ENCODE measurements at regions of chrX and their contacts with region 1.

Region 1: GRCh38 chrX:41457613-41458192 is 10.6 kb downstream of the NYX start:
- DNase-seq: no peak
- H3K4me3 ChIP-seq: no peak overlapping the region
- H3K27ac ChIP-seq: no peak overlapping the region
- H3K4me1 ChIP-seq: no peaks in the 10 kb centered on the region
- H3K27me3 ChIP-seq: no peaks in the 10 kb centered on the region
- CTCF ChIP-seq: 0 out of 2 replicates have a peak, but pooled peaks have one; percentile 20

Region 2: GRCh38 chrX:41728125-41728524 is 270.4 kb after region 1 on chrX:
- CTCF ChIA-PET with region 1: no interaction called
- POLR2A ChIA-PET with region 1: no interaction called
- intact Hi-C with region 1: loop called (anchors 5 kb)
- DNase-seq: no peak
- H3K4me3 ChIP-seq: no peak overlapping the region
- H3K27ac ChIP-seq: no peak overlapping the region
- H3K4me1 ChIP-seq: no peaks in the 10 kb centered on the region
- H3K27me3 ChIP-seq: no peaks in the 10 kb centered on the region
- CTCF ChIP-seq: no peak

Region 3: DNA sequence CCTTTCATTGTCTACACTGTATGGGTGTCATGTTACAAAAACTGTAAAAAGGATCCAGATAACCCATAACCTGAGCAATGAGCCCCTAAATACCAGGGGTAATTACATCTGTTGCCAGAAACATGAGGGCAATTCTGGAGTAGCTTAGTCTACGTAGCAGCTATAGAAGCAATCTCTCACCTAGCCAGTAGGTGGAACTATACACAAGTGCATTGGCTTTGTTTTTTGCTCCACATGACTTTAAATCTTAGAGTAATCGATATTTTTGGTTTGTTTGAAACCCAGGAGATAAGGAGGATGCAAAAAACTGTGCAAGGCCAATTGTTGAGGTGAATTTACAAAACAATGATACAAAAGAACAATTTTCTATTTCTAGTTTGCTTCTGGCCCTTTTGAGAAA is 323.8 kb after region 1 on chrX:
- CTCF ChIA-PET with region 1: interaction called, 26 read pairs
- POLR2A ChIA-PET with region 1: no interaction called
- intact Hi-C with region 1: no loop called
- DNase-seq: peak in 1 of 2 experiments; percentile 34
- H3K4me3 ChIP-seq: no peak overlapping the region
- H3K27ac ChIP-seq: no peak overlapping the region
- H3K4me1 ChIP-seq: 0 out of 2 replicates have a peak, but pooled peaks cover 6% of the 10 kb centered on the region
- H3K27me3 ChIP-seq: no peaks in the 10 kb centered on the region
- CTCF ChIP-seq: peak; percentile 68

Measured in PC-9 (cell line).